PC-9 (cell line): ENCODE measurements at regions of chr6 and their contacts with region 1.

Region 1: GRCh38 chr6:73129653-73130443 is 95.4 kb downstream of the KHDC1L start:
- DNase-seq: peak; percentile 77 to 87
- H3K4me3 ChIP-seq: no peak overlapping the region
- H3K27ac ChIP-seq: no peak overlapping the region
- H3K4me1 ChIP-seq: no peaks in the 10 kb centered on the region; the same call in 1 of the 2 replicates
- H3K27me3 ChIP-seq: no peaks in the 10 kb centered on the region
- CTCF ChIP-seq: peak; percentile 97

Region 2: GRCh38 chr6:72616406-72617015 is 513.3 kb before region 1 on chr6:
- CTCF ChIA-PET with region 1: interaction called, 12 read pairs
- POLR2A ChIA-PET with region 1: no interaction called
- intact Hi-C with region 1: loop called (anchors 1 kb)
- DNase-seq: no peak
- H3K4me3 ChIP-seq: no peak overlapping the region
- H3K27ac ChIP-seq: no peak overlapping the region
- H3K4me1 ChIP-seq: no peaks in the 10 kb centered on the region
- H3K27me3 ChIP-seq: no peaks in the 10 kb centered on the region
- CTCF ChIP-seq: peak; percentile 72